Posterior vena cava (tissue), 2 donors: ENCODE measurements at regions of chr3 and their contacts with region 1.

Region 1: GRCh38 chr3:68631810-68632545 is 300.4 kb downstream of the TAFA4 start:
- DNase-seq: no peak

Region 2: GRCh38 chr3:68664276-68664675 is 32.3 kb after region 1 on chr3:
- intact Hi-C with region 1: loop called in 1 of 2 experiments (anchors 1 kb)
- DNase-seq: no peak